K562 (cell line): ENCODE measurements at regions of chr6 and their contacts with region 1.

Region 1: GRCh38 chr6:3627956-3628835 is 123.3 kb downstream of the PXDC1 start:
- DNase-seq: no peak
- ATAC-seq: no peak
- H3K4me3 ChIP-seq: no peak overlapping the region
- H3K27ac ChIP-seq: no peak overlapping the region
- H3K4me1 ChIP-seq: peaks cover 4% of the 10 kb centered on the region in 2 experiments; a peak in 3 of 5 replicates
- H3K27me3 ChIP-seq: peaks cover 64 to 65% of the 10 kb centered on the region in 2 experiments
- CTCF ChIP-seq: no peak
- EP300 ChIP-seq: no peak
- POLR2A ChIP-seq: no peak
- RAD21 ChIP-seq: no peak

Region 2: GRCh38 chr6:3603340-3604130 is 24.7 kb before region 1 on chr6:
- CTCF ChIA-PET with region 1: no interaction called
- POLR2A ChIA-PET with region 1: no interaction called
- in situ Hi-C with region 1: no loop called
- intact Hi-C with region 1: no loop called
- DNase-seq: no peak
- ATAC-seq: no peak
- H3K4me3 ChIP-seq: no peak overlapping the region
- H3K27ac ChIP-seq: no peak overlapping the region
- H3K4me1 ChIP-seq: no peaks in the 10 kb centered on the region
- H3K27me3 ChIP-seq: peaks cover 22 to 32% of the 10 kb centered on the region in 2 experiments
- CTCF ChIP-seq: no peak
- EP300 ChIP-seq: no peak
- POLR2A ChIP-seq: no peak
- RAD21 ChIP-seq: no peak

Region 3: GRCh38 chr6:3721810-3722626 is 93.8 kb after region 1 on chr6:
- CTCF ChIA-PET with region 1: no interaction called
- POLR2A ChIA-PET with region 1: no interaction called
- in situ Hi-C with region 1: no loop called
- intact Hi-C with region 1: loop called (anchors 5 kb)
- DNase-seq: no peak
- ATAC-seq: no peak
- H3K4me3 ChIP-seq: no peak overlapping the region
- H3K27ac ChIP-seq: no peak overlapping the region
- H3K4me1 ChIP-seq: peaks cover 13 to 34% of the 10 kb centered on the region in 2 experiments; a peak in 4 of 5 replicates
- H3K27me3 ChIP-seq: peaks cover 30 to 53% of the 10 kb centered on the region in 2 experiments; a peak in 4 of 5 replicates
- CTCF ChIP-seq: no peak
- EP300 ChIP-seq: no peak
- POLR2A ChIP-seq: no peak
- RAD21 ChIP-seq: no peak